Activated CD4-positive, alpha-beta T cell treated with anti-CD3 and anti-CD28 coated beads, Interleukin-2, amount 10 ng/mL, durations not matched to agents 24 days and 14 days (primary cell): ENCODE measurements at regions of chr6 and their contacts with region 1.

Region 1: GRCh38 chr6:139580592-139581484 is 206.4 kb upstream of the CITED2 start:
- DNase-seq: no peak
- H3K4me3 Mint-ChIP-seq: peak overlapping the region; percentile 38
- H3K27ac Mint-ChIP-seq: peak overlapping the region; percentile 14
- H3K4me1 Mint-ChIP-seq: peaks cover 16% of the 10 kb centered on the region
- H3K27me3 Mint-ChIP-seq: peaks cover 7% of the 10 kb centered on the region

Region 2: DNA sequence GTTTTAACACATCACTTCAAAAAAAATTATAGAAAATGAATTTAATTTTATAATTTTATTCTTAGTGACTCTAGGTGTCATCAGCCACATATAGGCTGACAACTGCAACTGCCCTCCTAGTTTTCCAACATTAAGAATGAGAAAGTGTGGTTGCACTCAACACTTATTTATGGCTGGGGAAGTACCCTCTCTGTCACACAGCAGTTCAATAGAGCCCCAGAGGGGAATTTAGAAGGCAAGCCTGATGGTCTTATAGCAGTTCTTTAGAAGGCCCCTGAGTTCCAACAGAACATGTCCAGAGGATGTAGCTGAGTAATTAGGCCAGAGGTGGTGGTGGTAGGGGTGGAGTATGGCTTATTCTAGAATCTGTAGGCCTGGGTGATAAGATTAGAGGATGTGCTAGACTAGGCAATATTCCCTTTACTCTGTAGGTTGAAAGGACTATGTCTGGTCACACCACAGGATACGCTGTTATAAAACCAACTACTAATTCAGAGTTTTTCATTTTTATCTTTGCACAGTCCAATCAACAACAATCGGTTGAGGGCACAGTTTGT is 20.2 kb after region 1 on chr6:
- intact Hi-C with region 1: loop called (anchors 2 kb)
- DNase-seq: no peak
- H3K4me3 Mint-ChIP-seq: no peak overlapping the region
- H3K27ac Mint-ChIP-seq: peak overlapping the region; percentile 75
- H3K4me1 Mint-ChIP-seq: peaks cover 6% of the 10 kb centered on the region
- H3K27me3 Mint-ChIP-seq: no peaks in the 10 kb centered on the region

Region 3: GRCh38 chr6:139829576-139829975 is 248.7 kb after region 1 on chr6:
- intact Hi-C with region 1: no loop called
- DNase-seq: no peak
- H3K4me3 Mint-ChIP-seq: no peak overlapping the region
- H3K27ac Mint-ChIP-seq: no peak overlapping the region
- H3K4me1 Mint-ChIP-seq: no peaks in the 10 kb centered on the region
- H3K27me3 Mint-ChIP-seq: peaks cover 4% of the 10 kb centered on the region